ENCODE measurements at regions of chrX and their contacts with region 1.

Region 1: DNA sequence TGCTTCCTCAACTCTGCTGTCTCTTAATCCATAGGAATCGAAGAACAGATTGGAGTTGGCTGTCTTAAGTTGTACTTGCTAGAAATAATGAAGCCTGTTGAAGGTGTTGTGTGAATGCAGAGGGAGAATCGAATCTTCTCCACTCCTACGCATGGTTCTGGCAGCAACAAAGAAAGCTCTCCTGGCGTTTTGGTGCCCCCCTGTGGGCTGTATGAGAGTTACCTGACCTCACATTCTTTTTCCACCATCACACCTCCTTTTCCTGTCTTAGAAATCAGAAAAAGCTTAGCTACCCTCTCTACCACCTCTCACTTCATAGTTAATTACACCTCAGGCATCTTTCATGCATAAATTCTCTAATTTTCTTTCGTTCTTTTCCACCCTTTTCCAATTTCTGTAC is 16.3 kb downstream of the KLF8 start:
- DNase-seq: peak; percentile 52
- H3K4me3 ChIP-seq: no peak overlapping the region; a peak in 1 of 4 replicates
- H3K27ac ChIP-seq: no peak overlapping the region
- H3K4me1 ChIP-seq: no peaks in the 10 kb centered on the region
- H3K27me3 ChIP-seq: no peaks in the 10 kb centered on the region; the same call in 1 of the 2 replicates
- CTCF ChIP-seq: peak; percentile 80
- EP300 ChIP-seq: no peak
- RAD21 ChIP-seq: peak; percentile 74

Region 2: DNA sequence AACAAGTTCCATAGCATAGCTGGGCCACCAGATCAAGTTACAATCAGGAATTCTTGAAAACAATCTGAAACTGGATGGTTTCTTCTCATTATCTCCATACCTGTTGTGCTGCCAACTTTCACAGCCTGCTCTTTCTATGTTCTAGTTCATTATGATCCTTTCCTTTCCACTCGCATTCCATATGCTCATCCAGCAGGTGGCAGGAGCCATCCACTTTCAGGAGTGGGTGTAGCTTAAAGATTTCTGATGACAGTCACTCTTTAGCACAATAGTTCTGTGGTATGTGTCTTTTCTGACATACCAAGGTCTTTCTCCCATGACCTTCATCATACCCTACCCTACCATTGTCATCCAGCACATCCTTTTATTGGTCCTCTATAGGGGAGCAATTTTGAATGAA is 1113.3 kb before region 1 on chrX:
- CTCF ChIA-PET with region 1: interaction called, 22 read pairs
- POLR2A ChIA-PET with region 1: no interaction called
- DNase-seq: peak; percentile 41
- H3K4me3 ChIP-seq: no peak overlapping the region
- H3K27ac ChIP-seq: no peak overlapping the region
- H3K4me1 ChIP-seq: no peaks in the 10 kb centered on the region
- H3K27me3 ChIP-seq: peaks cover 7% of the 10 kb centered on the region; the same call in 1 of the 2 replicates
- CTCF ChIP-seq: peak; percentile 65
- EP300 ChIP-seq: no peak
- RAD21 ChIP-seq: peak; percentile 81

Region 3: DNA sequence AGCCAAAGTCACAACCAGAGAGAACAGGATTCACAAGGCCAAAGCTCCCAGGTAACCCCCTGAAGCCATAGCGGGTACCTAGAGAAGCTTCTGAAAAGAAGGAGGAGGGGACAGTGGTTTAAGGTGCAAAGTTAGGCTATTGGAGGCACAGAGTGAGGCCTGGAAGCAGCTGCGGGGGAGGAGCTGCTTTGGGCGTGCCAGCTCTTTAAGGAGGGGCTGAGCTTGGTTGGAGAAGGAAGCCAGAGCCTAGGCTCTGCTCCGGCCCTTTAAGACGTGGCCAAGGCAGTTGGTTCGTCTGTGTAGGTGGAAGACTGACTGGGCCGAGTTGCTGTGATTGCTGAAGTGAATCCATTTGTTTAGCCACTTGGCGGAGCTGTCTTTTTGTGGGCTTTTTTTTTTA is 14.8 kb before region 1 on chrX:
- CTCF ChIA-PET with region 1: interaction called, 16 read pairs
- POLR2A ChIA-PET with region 1: no interaction called
- DNase-seq: no peak
- H3K4me3 ChIP-seq: no peak overlapping the region
- H3K27ac ChIP-seq: no peak overlapping the region
- H3K4me1 ChIP-seq: no peaks in the 10 kb centered on the region
- H3K27me3 ChIP-seq: peaks cover 45% of the 10 kb centered on the region
- CTCF ChIP-seq: no peak
- EP300 ChIP-seq: no peak
- RAD21 ChIP-seq: no peak

Region 4: DNA sequence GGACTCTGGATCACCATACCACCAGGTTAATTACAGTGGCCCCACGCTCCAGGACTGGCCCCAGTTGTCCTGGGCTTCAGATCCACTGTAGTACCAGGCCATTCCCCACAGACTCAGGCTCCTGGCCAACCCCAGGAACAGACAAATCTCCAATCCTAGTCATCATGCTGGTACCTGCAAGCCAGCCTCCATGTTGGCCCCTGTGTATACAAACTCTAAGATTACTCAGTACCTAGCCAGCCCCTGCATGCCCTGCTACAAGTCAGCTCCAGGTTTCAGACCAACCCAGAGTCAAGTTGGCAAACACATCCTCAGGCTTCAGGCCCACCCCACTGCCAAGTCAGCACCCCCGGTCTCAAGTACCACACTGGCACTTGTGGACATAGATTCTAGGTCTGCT is 69.6 kb after region 1 on chrX:
- CTCF ChIA-PET with region 1: no interaction called
- POLR2A ChIA-PET with region 1: no interaction called
- DNase-seq: no peak
- H3K4me3 ChIP-seq: no peak overlapping the region
- H3K27ac ChIP-seq: no peak overlapping the region
- H3K4me1 ChIP-seq: no peaks in the 10 kb centered on the region
- H3K27me3 ChIP-seq: no peaks in the 10 kb centered on the region
- CTCF ChIP-seq: no peak
- EP300 ChIP-seq: no peak
- RAD21 ChIP-seq: no peak